ENCODE measurements at regions of chr1 and their contacts with region 1.

Region 1: GRCh38 chr1:152001391-152002249 is 8.0 kb upstream of the S100A10 start:
- DNase-seq: peak; percentile 89
- ATAC-seq: peak; percentile 67
- H3K4me3 Mint-ChIP-seq: no peak overlapping the region
- H3K27ac Mint-ChIP-seq: no peak overlapping the region
- H3K4me1 Mint-ChIP-seq: peaks cover 18% of the 10 kb centered on the region
- H3K27me3 Mint-ChIP-seq: peaks cover 4% of the 10 kb centered on the region
- CTCF ChIP-seq: peak; percentile 84

Region 2: GRCh38 chr1:151888972-151889570 is 112.5 kb before region 1 on chr1:
- CTCF ChIA-PET with region 1: interaction called, 12 read pairs
- POLR2A ChIA-PET with region 1: interaction called, 4 read pairs
- DNase-seq: no peak
- ATAC-seq: no peak
- H3K4me3 Mint-ChIP-seq: no peak overlapping the region
- H3K27ac Mint-ChIP-seq: no peak overlapping the region
- H3K4me1 Mint-ChIP-seq: no peaks in the 10 kb centered on the region
- H3K27me3 Mint-ChIP-seq: no peaks in the 10 kb centered on the region
- CTCF ChIP-seq: 0 out of 2 replicates have a peak, but pooled peaks have one; percentile 36

Region 3: GRCh38 chr1:151909150-151910149 is 92.2 kb before region 1 on chr1 and contains the start of gene THEM4:
- CTCF ChIA-PET with region 1: interaction called, 26 read pairs
- POLR2A ChIA-PET with region 1: no interaction called
- DNase-seq: peak; percentile 99
- ATAC-seq: peak; percentile 97
- H3K4me3 Mint-ChIP-seq: peak within 1 kb of the TSS; percentile 94
- H3K27ac Mint-ChIP-seq: peak within 1 kb of the TSS; percentile 100
- H3K4me1 Mint-ChIP-seq: peaks cover 12% of the 10 kb centered on the region
- H3K27me3 Mint-ChIP-seq: peaks cover 7% of the 10 kb centered on the region
- CTCF ChIP-seq: no peak
- total RNA-seq, gene THEM4: 8.0 to 10.9 TPM (median 8.8 TPM) in 3 replicates

Region 4: GRCh38 chr1:151942882-151943281 is 58.7 kb before region 1 on chr1:
- CTCF ChIA-PET with region 1: interaction called, 12 read pairs
- POLR2A ChIA-PET with region 1: no interaction called
- DNase-seq: no peak
- ATAC-seq: no peak
- H3K4me3 Mint-ChIP-seq: no peak overlapping the region
- H3K27ac Mint-ChIP-seq: no peak overlapping the region
- H3K4me1 Mint-ChIP-seq: peaks cover 16% of the 10 kb centered on the region
- H3K27me3 Mint-ChIP-seq: no peaks in the 10 kb centered on the region
- CTCF ChIP-seq: no peak

Region 5: GRCh38 chr1:151968058-151968457 is 33.6 kb before region 1 on chr1:
- CTCF ChIA-PET with region 1: interaction called, 293 read pairs
- POLR2A ChIA-PET with region 1: interaction called, 3 read pairs
- DNase-seq: peak; percentile 35
- ATAC-seq: peak; percentile 89
- H3K4me3 Mint-ChIP-seq: no peak overlapping the region
- H3K27ac Mint-ChIP-seq: no peak overlapping the region
- H3K4me1 Mint-ChIP-seq: peaks cover 38% of the 10 kb centered on the region
- H3K27me3 Mint-ChIP-seq: no peaks in the 10 kb centered on the region; the same call in 1 of the 2 replicates
- CTCF ChIP-seq: peak; percentile 57; the same call in 1 of the 2 replicates

Region 6: GRCh38 chr1:152013664-152014237 is 12.1 kb after region 1 on chr1:
- CTCF ChIA-PET with region 1: interaction called, 87 read pairs
- POLR2A ChIA-PET with region 1: no interaction called
- DNase-seq: peak; percentile 66
- ATAC-seq: peak; percentile 74
- H3K4me3 Mint-ChIP-seq: no peak overlapping the region
- H3K27ac Mint-ChIP-seq: peak overlapping the region; percentile 66
- H3K4me1 Mint-ChIP-seq: peaks cover 27% of the 10 kb centered on the region
- H3K27me3 Mint-ChIP-seq: no peaks in the 10 kb centered on the region
- CTCF ChIP-seq: no peak

Region 7: DNA sequence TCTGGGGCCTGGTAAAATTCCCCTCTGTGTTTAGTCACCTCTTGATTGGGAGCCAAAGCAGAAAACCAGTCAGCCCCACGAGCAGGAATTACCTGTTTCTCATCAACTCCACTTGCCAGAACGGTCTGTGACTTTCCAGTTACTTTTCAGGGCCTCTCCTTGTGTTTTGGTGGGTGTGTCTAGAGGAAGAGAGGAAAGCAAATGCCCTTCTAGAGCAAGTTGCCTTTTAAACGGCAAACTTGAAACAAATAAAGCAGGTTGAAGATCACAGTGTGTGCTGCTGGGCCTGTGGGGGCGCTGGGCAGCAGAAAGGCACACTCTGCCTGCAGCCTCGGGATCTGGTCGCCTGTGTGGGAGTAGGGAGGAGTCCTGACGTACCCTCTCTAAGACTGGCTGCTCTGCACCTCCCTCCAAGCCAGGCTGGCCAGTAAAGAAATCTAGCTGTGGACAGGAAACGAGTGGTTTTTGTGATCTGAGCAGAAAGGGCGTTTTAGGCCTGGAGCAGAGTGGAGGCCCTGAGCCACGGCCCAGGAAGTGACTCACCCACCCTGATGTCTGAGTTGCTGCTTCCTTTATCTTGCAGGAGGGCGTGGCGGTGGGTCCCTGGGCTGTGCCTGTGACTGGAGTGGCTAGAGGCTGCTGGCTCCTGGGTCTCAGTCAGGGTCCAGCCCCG is 46.2 kb after region 1 on chr1:
- CTCF ChIA-PET with region 1: interaction called, 12 read pairs
- POLR2A ChIA-PET with region 1: no interaction called
- DNase-seq: peak; percentile 79
- ATAC-seq: peak; percentile 91
- H3K4me3 Mint-ChIP-seq: peak overlapping the region; percentile 63
- H3K27ac Mint-ChIP-seq: peak overlapping the region; percentile 99
- H3K4me1 Mint-ChIP-seq: peaks cover 42% of the 10 kb centered on the region
- H3K27me3 Mint-ChIP-seq: peaks cover 8% of the 10 kb centered on the region; the same call in 1 of the 2 replicates
- CTCF ChIP-seq: no peak

Measured in WTC11 (cell line).